ENCODE measurements at regions of chr6 and their contacts with region 1.

Region 1: DNA sequence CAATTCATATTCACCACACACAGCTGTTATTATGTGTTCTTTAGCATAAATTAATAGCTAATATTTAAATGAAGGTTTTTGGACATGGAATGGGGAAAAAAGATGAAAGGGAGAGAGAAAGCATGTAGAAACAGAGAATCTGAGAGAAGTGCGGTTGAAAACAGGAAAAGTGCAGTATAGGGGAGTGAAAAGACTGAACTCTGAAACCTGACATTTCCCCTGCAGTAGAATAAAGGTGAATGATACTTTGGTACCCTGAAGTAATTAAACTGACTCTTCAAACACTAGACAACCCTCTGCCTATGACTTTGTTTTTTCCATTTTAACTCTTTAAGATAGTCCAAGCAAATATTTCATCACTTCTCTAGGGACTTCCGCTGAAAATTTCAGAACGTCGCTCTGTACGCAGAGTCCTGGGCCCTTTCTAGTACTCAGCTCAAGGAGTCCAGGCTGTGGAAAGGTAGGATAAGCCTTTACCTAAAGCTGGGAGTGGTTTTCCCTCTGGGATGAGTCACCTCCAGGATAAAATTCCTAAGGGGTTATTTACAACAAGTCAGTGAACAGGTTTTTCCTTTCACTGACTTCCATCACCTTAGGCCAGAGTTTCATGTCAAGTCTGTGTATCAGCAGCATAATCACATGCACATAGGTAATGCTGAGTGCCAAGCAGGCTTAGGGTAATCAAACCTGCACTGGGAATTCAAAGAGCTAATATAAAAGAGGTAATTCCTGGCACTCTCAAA is 614.5 kb downstream of the PKHD1 start:
- DNase-seq: no peak
- H3K4me3 ChIP-seq: no peak overlapping the region
- H3K27ac ChIP-seq: no peak overlapping the region
- H3K4me1 ChIP-seq: peaks cover 0 to 5% (median 0%) of the 10 kb centered on the region in 4 experiments; a peak in 1 of 7 replicates
- H3K27me3 ChIP-seq: no peaks in the 10 kb centered on the region
- CTCF ChIP-seq: no peak
- EP300 ChIP-seq: no peak
- POLR2A ChIP-seq: no peak
- RAD21 ChIP-seq: no peak

Region 2: DNA sequence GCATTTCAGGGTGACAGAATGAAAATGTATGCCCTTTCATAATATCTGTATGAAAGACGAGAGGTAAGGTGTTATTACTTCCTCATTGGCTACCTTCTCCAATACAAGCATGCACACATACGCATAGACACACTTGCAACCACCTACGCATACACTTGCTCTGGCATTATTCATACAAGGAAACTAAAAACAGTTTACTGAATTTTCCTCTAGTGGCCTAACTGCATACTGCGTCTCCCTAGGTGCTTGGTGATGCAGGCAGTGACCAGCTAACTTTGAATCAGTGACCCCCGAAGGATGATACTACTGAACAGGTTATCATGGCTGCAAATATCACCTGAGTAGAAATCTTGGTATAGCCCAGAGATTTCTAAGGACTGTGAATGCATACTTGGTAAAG is 21.4 kb after region 1 on chr6:
- CTCF ChIA-PET with region 1: interaction called, 13 read pairs
- POLR2A ChIA-PET with region 1: no interaction called
- DNase-seq: no peak
- H3K4me3 ChIP-seq: no peak overlapping the region
- H3K27ac ChIP-seq: no peak overlapping the region
- H3K4me1 ChIP-seq: peaks cover 0 to 4% (median 2%) of the 10 kb centered on the region in 4 experiments; a peak in 3 of 7 replicates
- H3K27me3 ChIP-seq: no peaks in the 10 kb centered on the region
- CTCF ChIP-seq: peak in 2 of 3 experiments; percentile 9 to 51; a peak in 2 of 4 replicates
- EP300 ChIP-seq: no peak
- POLR2A ChIP-seq: no peak
- RAD21 ChIP-seq: peak in 1 of 2 experiments; percentile 17; a peak in 1 of 4 replicates